Naive thymus-derived CD4-positive, alpha-beta T cell (primary cell): ENCODE measurements at regions of chr14 and their contacts with region 1.

Region 1: DNA sequence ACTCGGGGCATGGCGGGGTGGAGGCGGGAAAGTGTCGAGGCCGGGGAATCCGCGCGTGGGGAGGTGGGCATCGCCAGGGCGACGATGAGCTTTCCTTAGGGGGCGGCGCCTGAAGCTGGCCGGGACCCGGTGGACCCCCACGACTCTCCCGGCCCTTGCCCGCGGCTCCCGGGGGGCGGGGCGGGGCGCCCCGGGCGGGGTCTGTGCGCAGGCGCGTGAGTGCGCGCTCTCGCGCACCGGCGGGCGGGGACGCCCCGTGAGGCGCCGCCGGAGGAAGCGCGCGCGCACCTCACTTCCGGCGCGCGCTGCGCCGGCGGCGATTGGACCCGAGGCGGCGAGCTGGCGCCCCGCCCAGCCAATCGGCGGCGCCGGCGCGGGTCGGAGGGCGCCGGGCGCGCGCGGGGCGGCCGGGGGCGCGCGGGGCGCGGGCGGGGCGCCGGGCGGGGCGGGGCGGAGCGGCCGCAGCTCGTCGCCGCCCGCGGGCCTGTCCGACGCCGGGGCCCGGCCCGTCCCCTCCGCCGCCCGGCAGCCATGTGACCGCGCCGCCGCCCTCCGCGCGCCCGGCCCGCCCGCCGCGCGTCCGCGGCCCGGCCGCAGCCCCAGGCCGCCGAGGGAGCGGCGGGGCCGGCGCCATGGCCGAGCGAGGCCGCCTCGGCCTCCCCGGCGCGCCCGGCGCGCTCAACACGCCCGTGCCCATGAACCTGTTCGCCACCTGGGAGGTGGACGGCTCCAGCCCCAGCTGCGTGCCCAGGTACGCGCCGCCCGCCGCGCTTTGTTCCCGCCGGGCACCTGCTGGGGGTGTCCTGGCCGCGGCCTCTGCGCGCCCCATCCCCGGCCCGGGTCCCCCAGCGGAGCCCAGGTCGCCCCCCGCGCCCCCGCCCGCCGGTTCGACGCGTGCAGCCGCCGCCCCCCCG is at the start of gene PACS2:
- DNase-seq: peak; percentile 64 to 90 (median 86)
- ATAC-seq: peak; percentile 89
- H3K4me3 ChIP-seq: peak within 1 kb of the TSS; percentile 57
- H3K4me3 Mint-ChIP-seq: peak within 1 kb of the TSS; percentile 80 to 98 (median 89)
- H3K27ac ChIP-seq: peak within 1 kb of the TSS; percentile 68
- H3K27ac Mint-ChIP-seq: peak within 1 kb of the TSS; percentile 74 to 95 (median 89)
- H3K4me1 ChIP-seq: peaks cover 13 to 21% of the 10 kb centered on the region in 2 donors
- H3K4me1 Mint-ChIP-seq: peaks cover 9 to 35% (median 23%) of the 10 kb centered on the region in 7 donors
- H3K27me3 ChIP-seq: no peaks in the 10 kb centered on the region
- H3K27me3 Mint-ChIP-seq: peaks cover 0 to 9% (median 0%) of the 10 kb centered on the region in 5 donors
- total RNA-seq, gene PACS2: 33.9 to 75.4 (median 72.3) TPM

Region 2: GRCh38 chr14:105180592-105181548 is 133.7 kb before region 1 on chr14 and contains the start of gene NUDT14:
- CTCF ChIA-PET with region 1: no interaction called
- POLR2A ChIA-PET with region 1: interaction called, 4 read pairs
- intact Hi-C with region 1: loop called in 1 of 2 experiments (anchors 1 kb)
- DNase-seq: peak; percentile 69 to 88 (median 82)
- ATAC-seq: peak; percentile 94
- H3K4me3 ChIP-seq: peak within 1 kb of the TSS; percentile 52
- H3K4me3 Mint-ChIP-seq: peak within 1 kb of the TSS; percentile 68 to 86 (median 77)
- H3K27ac ChIP-seq: peak within 1 kb of the TSS; percentile 53
- H3K27ac Mint-ChIP-seq: peak within 1 kb of the TSS in 7 of 9 donors; percentile 10 to 76 (median 64)
- H3K4me1 ChIP-seq: peaks cover 4 to 12% of the 10 kb centered on the region in 2 donors
- H3K4me1 Mint-ChIP-seq: peaks cover 0 to 23% (median 15%) of the 10 kb centered on the region in 7 donors
- H3K27me3 ChIP-seq: no peaks in the 10 kb centered on the region
- H3K27me3 Mint-ChIP-seq: peaks cover 0 to 4% (median 0%) of the 10 kb centered on the region in 5 donors
- total RNA-seq, gene NUDT14: 17.3 to 29.6 (median 20.6) TPM

Region 3: DNA sequence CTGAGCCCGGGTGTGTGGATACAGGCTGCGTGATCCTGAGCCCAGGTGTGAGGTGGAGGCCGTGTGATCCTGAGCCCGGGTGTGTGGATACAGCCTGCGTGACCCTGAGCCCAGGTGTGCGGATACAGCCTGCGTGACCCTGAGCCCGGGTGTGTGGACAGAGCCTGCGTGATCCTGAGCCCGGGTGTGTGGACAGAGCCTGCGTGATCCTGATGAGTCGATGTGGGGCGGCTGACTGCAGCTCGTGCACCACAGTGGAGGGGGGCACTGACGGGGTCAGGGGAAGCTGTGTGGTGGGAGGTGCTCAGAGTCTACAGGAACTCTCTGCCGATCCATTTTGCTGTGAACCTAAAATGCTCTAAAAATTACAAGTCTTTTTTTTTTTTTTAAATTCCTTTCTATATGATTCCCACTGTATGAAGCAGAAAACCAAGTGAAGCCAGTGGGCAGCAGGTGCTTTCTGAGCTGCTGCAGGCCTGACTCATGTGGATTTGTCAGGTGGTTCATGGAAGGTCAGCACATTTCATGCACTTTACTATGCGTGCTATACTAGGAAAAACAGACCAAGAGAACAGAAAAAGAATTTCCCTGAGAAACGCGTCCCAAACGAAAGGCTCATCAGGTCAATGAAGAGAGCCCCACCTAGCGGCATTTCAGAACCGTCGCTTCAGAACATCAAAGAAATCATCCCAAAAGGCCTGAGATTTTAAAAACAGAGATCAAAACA is 33.0 kb before region 1 on chr14:
- CTCF ChIA-PET with region 1: no interaction called
- POLR2A ChIA-PET with region 1: no interaction called
- intact Hi-C with region 1: loop called in 1 of 2 experiments (anchors 5 kb)
- DNase-seq: peak in 6 of 9 donors; percentile 10 to 41 (median 30)
- ATAC-seq: peak; percentile 26
- H3K4me3 ChIP-seq: no peak overlapping the region
- H3K4me3 Mint-ChIP-seq: peak overlapping the region in 2 of 10 donors; percentile 1 to 5
- H3K27ac ChIP-seq: no peak overlapping the region
- H3K27ac Mint-ChIP-seq: peak overlapping the region in 5 of 9 donors; percentile 5 to 74 (median 47)
- H3K4me1 ChIP-seq: peaks cover 0 to 12% of the 10 kb centered on the region in 2 donors
- H3K4me1 Mint-ChIP-seq: peaks cover 13 to 55% (median 46%) of the 10 kb centered on the region in 7 donors
- H3K27me3 ChIP-seq: no peaks in the 10 kb centered on the region
- H3K27me3 Mint-ChIP-seq: no peaks in the 10 kb centered on the region

Region 4: DNA sequence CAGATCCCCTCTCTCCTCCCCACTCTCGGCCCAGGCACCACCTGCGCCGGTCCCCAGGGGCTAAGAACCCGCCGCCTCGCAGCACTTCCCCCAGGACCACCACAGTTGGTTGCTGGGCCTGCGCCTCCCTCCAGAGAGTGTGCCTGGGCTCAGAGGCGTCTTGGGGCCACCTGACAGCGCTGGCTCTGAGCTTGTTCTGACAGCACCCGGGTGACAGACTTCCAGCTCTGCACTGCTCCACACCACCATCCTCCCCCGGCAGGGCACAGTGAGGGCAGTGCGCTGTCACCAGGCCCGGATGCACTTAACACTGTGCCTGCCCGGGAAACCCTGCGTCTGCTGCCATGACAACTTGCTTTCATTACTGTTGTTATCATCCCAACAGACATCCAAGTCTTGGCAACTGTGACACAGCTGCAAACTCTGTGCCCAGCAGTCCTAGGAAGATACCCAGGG is 20.4 kb before region 1 on chr14:
- CTCF ChIA-PET with region 1: no interaction called
- POLR2A ChIA-PET with region 1: interaction called, 19 read pairs
- intact Hi-C with region 1: no loop called
- DNase-seq: peak; percentile 50 to 82 (median 74)
- ATAC-seq: peak; percentile 94
- H3K4me3 ChIP-seq: peak overlapping the region; percentile 21
- H3K4me3 Mint-ChIP-seq: peak overlapping the region; percentile 39 to 85 (median 78)
- H3K27ac ChIP-seq: peak overlapping the region; percentile 65
- H3K27ac Mint-ChIP-seq: peak overlapping the region; percentile 89 to 99 (median 96)
- H3K4me1 ChIP-seq: peaks cover 14 to 34% of the 10 kb centered on the region in 2 donors
- H3K4me1 Mint-ChIP-seq: peaks cover 31 to 53% (median 46%) of the 10 kb centered on the region in 7 donors
- H3K27me3 ChIP-seq: no peaks in the 10 kb centered on the region
- H3K27me3 Mint-ChIP-seq: no peaks in the 10 kb centered on the region